Dorsolateral prefrontal cortex (tissue), 120 donors: ENCODE measurements at regions of chrX and their contacts with region 1.

Region 1: DNA sequence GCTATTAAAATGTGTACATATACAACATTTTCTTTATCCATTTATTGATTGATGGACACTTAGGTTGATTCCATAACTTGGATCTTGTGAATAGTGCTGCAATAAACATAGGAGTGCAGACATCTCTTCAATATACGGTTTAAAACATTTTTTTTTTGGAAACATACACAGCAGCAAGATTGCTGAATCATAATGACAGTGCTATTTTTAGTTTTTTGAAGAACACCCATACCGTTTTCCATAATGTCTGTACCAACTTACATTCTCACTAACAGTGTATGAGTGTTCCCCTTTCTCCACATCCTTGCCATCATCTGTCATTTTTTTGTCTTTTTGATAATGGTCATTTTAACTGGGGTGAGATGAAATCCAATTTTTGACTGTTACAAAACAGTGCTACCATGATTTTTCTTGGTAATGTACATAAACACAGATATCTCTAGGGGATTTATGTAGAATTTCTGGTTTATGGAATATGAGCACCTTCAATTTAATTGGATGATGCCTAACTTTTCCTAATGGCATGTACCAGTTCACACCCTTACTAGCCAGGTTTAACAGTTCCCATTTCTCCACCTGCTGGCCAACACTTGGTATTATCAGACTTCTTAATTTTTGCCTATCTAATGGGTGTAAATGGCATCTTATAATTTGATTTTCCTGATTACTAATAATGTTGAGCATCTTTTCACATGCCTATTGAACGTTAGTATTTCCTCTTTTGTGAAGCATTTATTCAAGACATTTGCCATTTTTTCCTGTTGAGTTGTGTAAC is 21.0 kb upstream of the TMSB15B start:
- DNase-seq: no peak
- H3K4me3 ChIP-seq: no peak overlapping the region
- H3K27ac ChIP-seq: no peak overlapping the region
- H3K27me3 ChIP-seq: peaks cover 0 to 69% (median 28%) of the 10 kb centered on the region in 45 donors
- CTCF ChIP-seq: peak in 51 of 56 donors; percentile 9 to 68 (median 41)

Region 2: DNA sequence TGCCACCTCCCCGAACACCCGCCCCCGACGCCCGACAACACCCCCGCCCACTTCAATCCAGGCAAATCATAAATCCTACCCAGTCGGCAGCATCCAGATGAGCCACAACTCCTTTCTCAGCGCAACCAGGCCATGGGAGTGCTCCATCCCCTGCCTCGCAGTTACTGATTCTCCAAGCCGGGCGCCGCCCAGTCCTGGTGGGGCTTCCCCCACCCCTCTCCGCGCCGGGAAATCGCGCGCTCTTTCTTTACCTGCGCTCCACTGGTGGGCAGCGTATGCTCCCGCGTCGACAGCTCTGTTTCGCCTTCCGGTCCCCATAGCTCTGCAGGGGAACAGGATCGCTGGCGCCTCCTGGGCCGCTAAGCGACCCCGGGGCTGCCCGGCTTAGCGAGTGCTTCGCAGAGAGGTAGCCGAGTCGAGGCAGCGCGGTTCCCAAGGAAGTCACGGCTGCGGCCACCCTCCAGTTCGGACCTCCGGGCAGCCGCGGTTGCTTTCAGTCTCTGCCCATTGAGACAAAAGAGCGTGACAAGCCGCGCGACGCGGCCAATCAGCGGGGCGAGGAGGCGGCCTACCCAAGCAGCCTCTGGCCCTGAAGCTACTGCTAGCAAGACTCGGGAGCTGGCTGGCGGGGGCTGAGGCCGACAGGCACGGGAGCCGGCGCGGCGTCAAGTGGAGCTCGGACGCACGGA is 22.7 kb before region 1 on chrX:
- intact Hi-C with region 1: loop called in 1 of 2 experiments (anchors 2 kb)
- DNase-seq: peak; percentile 38 to 78 (median 66)
- H3K4me3 ChIP-seq: peak overlapping the region; percentile 40 to 75 (median 62)
- H3K27ac ChIP-seq: peak overlapping the region in 43 of 59 donors; percentile 1 to 84 (median 54)
- H3K27me3 ChIP-seq: peaks cover 0 to 67% (median 16%) of the 10 kb centered on the region in 45 donors
- CTCF ChIP-seq: peak in 3 of 56 donors; percentile 3 to 13 (median 10)